ENCODE measurements at regions of chr20 and their contacts with region 1.

Region 1: GRCh38 chr20:21505161-21505809 is 8.6 kb downstream of the NKX2-2 start:
- DNase-seq: peak; percentile 89
- ATAC-seq: peak; percentile 78
- H3K4me3 Mint-ChIP-seq: peak overlapping the region; percentile 53
- H3K27ac Mint-ChIP-seq: no peak overlapping the region
- H3K4me1 Mint-ChIP-seq: peaks cover 15% of the 10 kb centered on the region
- H3K27me3 Mint-ChIP-seq: peaks cover 51% of the 10 kb centered on the region
- CTCF ChIP-seq: peak; percentile 95

Region 2: DNA sequence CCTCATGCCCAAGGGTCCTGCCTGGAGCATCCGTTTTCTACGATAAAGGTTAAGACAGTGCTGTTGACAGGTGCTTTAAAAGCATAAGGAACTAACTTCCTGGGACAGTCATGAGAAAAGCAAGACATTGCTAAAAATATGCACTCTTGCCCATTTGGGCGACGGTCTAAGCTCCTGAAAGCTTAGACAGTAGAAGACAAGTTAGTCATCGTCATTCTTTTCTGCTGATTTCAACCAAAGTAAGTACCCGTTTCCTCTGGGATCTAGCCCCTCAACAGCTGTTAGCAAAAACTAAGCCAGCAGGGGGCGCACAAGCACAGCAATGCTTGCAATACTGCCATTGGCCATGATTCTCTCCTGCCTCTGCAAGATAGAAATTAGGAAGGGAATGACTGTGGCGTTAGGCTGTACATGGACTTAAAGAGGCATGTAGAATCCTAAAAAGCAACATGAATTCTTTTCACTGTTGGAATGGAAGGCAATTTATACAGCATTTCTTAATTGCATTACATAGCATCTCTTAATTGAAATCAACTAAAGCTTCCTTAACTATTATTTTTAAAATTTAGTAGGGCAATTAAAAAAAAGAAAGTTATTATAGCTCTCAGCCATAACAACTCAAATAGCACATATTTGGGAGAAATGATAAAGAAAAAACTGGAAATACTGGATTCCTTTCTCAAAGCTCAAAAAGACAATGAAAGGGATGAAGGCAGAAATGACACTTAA is 645.0 kb before region 1 on chr20:
- CTCF ChIA-PET with region 1: interaction called, 12 read pairs
- POLR2A ChIA-PET with region 1: no interaction called
- intact Hi-C with region 1: loop called (anchors 5 kb)
- DNase-seq: peak; percentile 94
- ATAC-seq: peak; percentile 77
- H3K4me3 Mint-ChIP-seq: no peak overlapping the region
- H3K27ac Mint-ChIP-seq: no peak overlapping the region
- H3K4me1 Mint-ChIP-seq: no peaks in the 10 kb centered on the region
- H3K27me3 Mint-ChIP-seq: peaks cover 4% of the 10 kb centered on the region
- CTCF ChIP-seq: peak; percentile 94

Region 3: DNA sequence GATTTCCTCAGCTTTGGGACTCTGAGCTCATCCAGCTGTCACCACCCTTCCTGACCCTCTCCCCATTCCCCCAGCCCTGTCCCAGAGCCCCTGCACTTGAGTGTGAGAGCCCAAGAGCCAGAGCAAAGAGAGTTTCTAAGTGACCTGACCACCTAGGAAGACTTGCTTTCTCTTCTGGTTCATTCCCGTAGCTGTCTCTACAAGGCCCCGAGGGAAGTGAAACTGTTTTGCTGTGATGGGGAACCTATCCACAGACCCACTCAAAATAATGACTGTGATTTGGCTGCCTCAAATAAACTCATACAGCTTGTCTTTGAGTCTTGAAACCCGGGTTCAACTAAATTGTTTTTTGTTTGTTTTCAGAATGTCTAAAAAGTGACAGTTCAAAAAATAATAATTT is 276.8 kb before region 1 on chr20:
- CTCF ChIA-PET with region 1: interaction called, 13 read pairs
- POLR2A ChIA-PET with region 1: no interaction called
- intact Hi-C with region 1: no loop called
- DNase-seq: no peak
- ATAC-seq: no peak
- H3K4me3 Mint-ChIP-seq: no peak overlapping the region
- H3K27ac Mint-ChIP-seq: no peak overlapping the region
- H3K4me1 Mint-ChIP-seq: no peaks in the 10 kb centered on the region
- H3K27me3 Mint-ChIP-seq: no peaks in the 10 kb centered on the region
- CTCF ChIP-seq: no peak

Region 4: DNA sequence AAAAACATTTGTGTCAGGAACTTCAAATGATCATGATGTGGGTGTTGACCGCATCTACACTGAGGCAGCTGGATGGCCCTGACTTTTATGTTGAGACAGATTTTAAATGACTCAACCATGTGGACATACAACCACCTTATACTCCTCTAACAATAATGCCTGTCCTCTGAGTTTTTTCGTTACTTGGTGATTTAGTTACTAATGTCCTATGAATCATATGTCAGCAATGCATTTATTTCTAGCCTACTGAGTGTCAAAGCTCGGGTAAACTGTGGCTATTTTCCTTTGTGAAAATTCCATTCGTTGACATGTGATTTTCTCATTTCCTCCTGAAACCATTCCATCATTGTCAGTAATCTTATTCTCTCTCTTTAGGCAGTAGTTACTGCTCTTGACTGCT is 69.1 kb before region 1 on chr20:
- CTCF ChIA-PET with region 1: no interaction called
- POLR2A ChIA-PET with region 1: no interaction called
- intact Hi-C with region 1: no loop called
- DNase-seq: no peak
- ATAC-seq: no peak
- H3K4me3 Mint-ChIP-seq: no peak overlapping the region
- H3K27ac Mint-ChIP-seq: no peak overlapping the region
- H3K4me1 Mint-ChIP-seq: no peaks in the 10 kb centered on the region
- H3K27me3 Mint-ChIP-seq: peaks cover 21% of the 10 kb centered on the region
- CTCF ChIP-seq: no peak

Region 5: GRCh38 chr20:21490095-21490494 is 15.2 kb before region 1 on chr20:
- CTCF ChIA-PET with region 1: interaction called, 14 read pairs
- POLR2A ChIA-PET with region 1: no interaction called
- intact Hi-C with region 1: no loop called
- DNase-seq: no peak
- ATAC-seq: no peak
- H3K4me3 Mint-ChIP-seq: no peak overlapping the region
- H3K27ac Mint-ChIP-seq: no peak overlapping the region
- H3K4me1 Mint-ChIP-seq: no peaks in the 10 kb centered on the region
- H3K27me3 Mint-ChIP-seq: peaks cover 29% of the 10 kb centered on the region
- CTCF ChIP-seq: no peak

Region 6: DNA sequence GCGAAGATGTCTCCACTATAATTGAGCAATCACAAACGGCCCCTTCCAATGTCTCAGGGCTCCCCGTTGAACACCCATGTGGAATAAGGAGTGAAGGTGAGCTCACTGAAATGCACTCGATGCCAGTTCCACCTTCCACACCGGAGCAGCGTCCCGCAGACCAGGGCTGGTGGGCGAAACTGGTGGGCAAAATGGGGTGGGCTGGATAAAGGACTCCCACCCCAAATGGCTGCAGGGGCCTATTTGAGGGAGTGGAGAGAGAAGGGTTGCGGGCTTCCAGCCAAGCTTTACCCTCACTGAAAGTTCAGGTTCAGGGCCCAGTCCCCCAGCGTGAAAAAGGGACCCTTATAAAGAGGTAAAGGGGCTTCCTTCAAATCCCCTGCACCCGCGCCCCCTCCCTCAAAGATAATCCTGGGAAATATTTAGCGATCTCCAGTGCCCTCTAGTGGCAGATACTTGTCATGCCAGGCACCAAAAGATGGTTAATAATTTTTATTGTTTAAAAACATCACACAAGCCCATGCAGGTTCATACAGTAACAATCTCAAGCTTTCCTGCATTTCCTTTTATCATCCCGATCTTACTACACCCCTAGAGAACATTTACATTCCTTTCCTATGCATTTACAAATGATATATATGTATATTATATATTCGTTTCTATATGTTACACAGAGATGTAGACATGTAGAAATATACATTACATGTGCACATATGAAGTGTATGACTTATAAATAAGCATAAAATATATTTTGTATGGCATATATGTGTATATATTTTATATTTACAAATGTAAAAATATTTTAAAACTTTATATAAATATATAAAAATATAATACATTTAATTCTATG is 66.8 kb after region 1 on chr20:
- CTCF ChIA-PET with region 1: interaction called, 10 read pairs
- POLR2A ChIA-PET with region 1: no interaction called
- intact Hi-C with region 1: no loop called
- DNase-seq: peak; percentile 21
- ATAC-seq: peak; percentile 27
- H3K4me3 Mint-ChIP-seq: no peak overlapping the region
- H3K27ac Mint-ChIP-seq: no peak overlapping the region
- H3K4me1 Mint-ChIP-seq: peaks cover 6% of the 10 kb centered on the region
- H3K27me3 Mint-ChIP-seq: peaks cover 15% of the 10 kb centered on the region
- CTCF ChIP-seq: peak; percentile 98

Region 7: DNA sequence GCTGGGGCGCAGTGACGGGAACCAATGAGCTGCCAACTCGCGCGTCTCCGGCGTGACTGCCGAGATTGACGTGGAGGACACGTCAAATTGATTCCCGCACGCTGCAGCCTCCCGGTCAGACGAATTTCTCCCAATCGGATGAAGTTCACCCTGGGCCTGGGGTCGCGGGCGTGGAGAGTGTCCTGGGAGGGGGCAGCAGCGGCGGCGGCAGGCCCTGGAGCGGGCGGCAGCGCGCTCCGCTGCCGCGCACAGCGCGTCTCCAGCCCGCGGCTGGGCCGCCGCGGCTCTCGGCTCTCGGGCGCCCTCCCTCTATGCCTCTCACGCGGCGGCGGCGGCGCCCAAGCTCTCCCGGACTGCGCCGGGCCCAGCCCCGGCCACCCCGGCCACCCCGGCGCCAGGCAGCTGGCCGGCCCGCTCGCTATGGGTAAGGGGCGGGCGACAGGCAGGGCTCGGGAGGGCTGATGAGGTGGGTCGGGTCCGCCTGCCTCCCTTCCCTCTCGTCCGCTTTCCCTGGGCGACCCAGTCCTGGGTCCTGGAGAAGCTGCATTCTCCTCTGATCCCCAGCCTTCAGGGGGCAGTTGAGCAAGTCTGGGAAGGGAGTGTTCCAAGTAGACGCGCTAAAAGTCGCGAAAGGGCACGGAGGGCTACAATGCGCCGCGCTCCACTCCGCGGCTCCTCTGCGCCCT is 200.4 kb after region 1 on chr20 and contains the start of gene PAX1:
- CTCF ChIA-PET with region 1: no interaction called
- POLR2A ChIA-PET with region 1: no interaction called
- intact Hi-C with region 1: no loop called
- DNase-seq: no peak
- ATAC-seq: no peak
- H3K4me3 Mint-ChIP-seq: no peak within 1 kb of the TSS
- H3K27ac Mint-ChIP-seq: no peak within 1 kb of the TSS
- H3K4me1 Mint-ChIP-seq: peaks cover 3% of the 10 kb centered on the region
- H3K27me3 Mint-ChIP-seq: peaks cover 84% of the 10 kb centered on the region
- CTCF ChIP-seq: no peak
- total RNA-seq, gene PAX1: not detected

Measured in activated CD8-positive, alpha-beta T cell treated with anti-CD3 and anti-CD28 coated beads for 36 hours (primary cell).